MCF 10A (cell line): ENCODE measurements at regions of chr6 and their contacts with region 1.

Region 1: GRCh38 chr6:74343804-74344203 is 647.8 kb downstream of the CD109 start:
- DNase-seq: peak; percentile 28
- H3K4me3 Mint-ChIP-seq: no peak overlapping the region
- H3K27ac Mint-ChIP-seq: no peak overlapping the region
- H3K4me1 Mint-ChIP-seq: no peaks in the 10 kb centered on the region
- H3K27me3 Mint-ChIP-seq: no peaks in the 10 kb centered on the region
- CTCF ChIP-seq: no peak

Region 2: DNA sequence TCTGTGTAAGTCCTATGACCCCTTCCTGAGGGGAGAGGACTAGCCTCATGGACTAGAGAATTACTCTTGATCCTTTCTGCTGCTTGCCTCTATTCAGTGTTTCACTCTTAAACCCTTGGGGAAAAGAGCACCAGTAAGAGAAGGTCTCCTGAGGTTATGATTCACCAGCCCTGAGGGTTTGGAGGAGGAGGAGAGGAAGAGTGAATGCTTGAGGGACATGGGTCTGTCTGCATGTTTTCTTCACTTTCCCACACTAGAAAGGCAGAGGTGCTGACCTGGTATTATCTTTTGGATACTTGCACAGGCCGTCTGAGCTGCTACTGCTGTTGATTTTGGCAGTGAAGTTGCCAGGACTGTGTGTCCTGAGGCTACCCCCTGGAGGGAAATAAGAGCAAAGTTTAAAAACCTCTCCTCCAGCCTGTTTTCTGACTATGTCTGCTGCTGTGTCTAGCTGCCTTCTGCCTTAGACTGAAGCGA is 569.5 kb before region 1 on chr6:
- CTCF ChIA-PET with region 1: no interaction called
- POLR2A ChIA-PET with region 1: no interaction called
- intact Hi-C with region 1: no loop called
- DNase-seq: peak; percentile 97
- H3K4me3 Mint-ChIP-seq: peak overlapping the region; percentile 8
- H3K27ac Mint-ChIP-seq: peak overlapping the region; percentile 91
- H3K4me1 Mint-ChIP-seq: peaks cover 31% of the 10 kb centered on the region
- H3K27me3 Mint-ChIP-seq: no peaks in the 10 kb centered on the region
- CTCF ChIP-seq: no peak

Region 3: DNA sequence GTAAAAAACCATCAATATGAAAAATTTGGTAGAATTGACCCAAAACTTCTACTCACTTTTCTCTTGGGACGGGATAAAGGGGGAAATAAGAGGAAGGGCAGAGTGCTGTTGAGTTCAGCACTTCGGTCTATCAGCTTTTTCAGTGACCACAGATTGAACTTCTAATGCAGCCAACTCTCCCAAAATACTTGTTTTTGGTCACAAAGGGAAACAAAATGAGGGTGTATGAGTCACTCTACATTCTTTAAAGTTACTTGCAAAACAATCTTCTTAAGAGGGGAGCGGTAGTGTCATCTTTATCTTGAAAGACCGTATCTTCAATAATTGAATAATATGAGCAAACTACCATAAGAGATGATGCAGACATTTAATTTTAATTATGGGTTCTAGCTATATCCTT is 13.5 kb after region 1 on chr6:
- CTCF ChIA-PET with region 1: interaction called, 15 read pairs
- POLR2A ChIA-PET with region 1: interaction called, 6 read pairs
- intact Hi-C with region 1: no loop called
- DNase-seq: peak; percentile 49
- H3K4me3 Mint-ChIP-seq: no peak overlapping the region
- H3K27ac Mint-ChIP-seq: peak overlapping the region; percentile 27
- H3K4me1 Mint-ChIP-seq: peaks cover 5% of the 10 kb centered on the region
- H3K27me3 Mint-ChIP-seq: no peaks in the 10 kb centered on the region
- CTCF ChIP-seq: no peak